ENCODE measurements at regions of chr2 and their contacts with region 1.

Region 1: DNA sequence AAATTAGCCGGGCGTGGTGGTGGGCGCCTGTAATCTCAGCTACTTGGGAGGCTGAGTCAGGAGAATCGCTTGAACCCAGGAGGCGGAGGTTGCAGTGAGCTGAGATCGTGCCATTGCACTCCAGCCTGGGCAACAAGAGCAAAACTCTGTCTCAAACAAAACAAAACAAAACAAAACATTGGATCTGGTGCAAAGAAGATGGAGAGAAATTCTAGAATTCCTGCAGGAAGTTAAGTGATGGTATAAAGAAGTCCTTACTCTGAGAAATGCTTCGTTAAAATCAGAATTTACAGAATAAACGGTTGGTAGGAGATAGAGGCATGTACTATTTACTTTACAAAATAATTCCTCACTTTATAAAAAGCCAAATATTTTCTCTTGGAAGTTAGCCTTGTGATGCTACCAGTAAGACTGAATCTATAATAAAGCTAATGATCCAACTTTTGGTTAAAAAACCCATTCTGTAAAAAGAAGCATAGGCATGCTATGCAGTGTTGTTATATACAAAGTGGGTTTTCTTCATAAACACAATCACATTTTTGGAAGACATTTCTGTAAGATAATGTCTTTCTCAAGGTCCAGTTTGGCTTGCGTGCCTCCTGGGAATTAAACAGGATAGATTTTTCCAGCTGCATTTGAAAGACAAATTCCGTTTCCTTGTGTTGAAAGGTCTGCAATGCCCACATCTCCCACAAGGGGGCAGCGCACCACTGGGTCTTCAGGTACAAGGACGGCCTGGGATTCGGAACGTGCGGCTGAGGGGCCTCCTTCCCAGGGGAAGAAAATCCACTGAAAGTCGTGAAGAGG is 35.6 kb upstream of the PNO1 start:
- DNase-seq: peak; percentile 93
- ATAC-seq: peak; percentile 64

Region 2: DNA sequence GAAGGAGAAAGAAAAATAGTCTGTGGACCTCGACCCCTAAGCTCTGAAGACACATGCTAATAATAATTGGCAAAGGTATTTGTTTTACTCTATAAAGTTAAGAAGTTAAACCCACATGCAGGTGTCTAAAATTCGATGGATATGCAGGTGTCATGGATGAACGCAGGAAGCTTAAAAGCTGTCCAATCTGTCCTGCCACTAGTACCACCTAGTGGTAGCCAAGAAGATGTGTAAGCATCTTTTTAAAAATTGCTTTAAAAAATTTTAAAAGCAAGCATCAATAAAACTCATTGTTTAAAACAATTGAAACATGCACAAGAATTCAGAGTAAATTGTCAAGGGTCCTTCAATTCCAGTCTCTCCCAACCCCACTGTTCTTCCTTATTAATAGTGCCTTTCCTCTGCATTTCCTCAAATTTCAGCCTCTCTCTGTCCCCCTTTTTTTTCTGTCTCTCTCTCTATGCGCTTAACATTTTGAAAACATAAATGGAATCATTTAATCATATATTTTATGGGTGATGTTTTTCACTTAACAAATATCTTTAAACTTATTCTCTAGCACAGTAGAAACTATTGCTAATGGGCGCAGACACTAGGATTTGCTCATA is 160.8 kb after region 1 on chr2:
- intact Hi-C with region 1: loop called (anchors 2 kb)
- DNase-seq: no peak
- ATAC-seq: no peak

Region 3: GRCh38 chr2:68309426-68309825 is 187.3 kb after region 1 on chr2:
- intact Hi-C with region 1: no loop called
- DNase-seq: no peak
- ATAC-seq: no peak

Region 4: DNA sequence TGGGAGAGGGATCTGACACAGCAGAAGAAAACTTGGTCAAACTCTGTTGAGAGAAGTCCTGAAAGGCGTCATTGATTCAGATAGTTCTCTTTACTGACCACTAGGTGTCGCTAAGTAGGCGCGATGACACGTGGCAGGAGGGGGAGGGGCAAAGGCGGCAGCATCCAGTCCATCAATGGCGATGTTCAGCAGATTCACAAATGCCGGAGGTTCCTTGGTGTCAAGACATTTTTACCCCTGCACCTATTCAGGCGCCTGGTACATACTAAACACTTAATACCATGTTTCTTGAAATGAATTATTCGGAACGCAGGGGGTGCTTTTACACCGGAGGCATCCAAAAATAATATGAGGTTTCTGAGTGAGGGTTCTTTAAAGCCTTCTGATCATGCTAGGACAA is 240.0 kb after region 1 on chr2:
- intact Hi-C with region 1: loop called (anchors 5 kb)
- DNase-seq: peak; percentile 92
- ATAC-seq: peak; percentile 71

Region 5: GRCh38 chr2:68441179-68441993 is 319.3 kb after region 1 on chr2:
- intact Hi-C with region 1: loop called (anchors 2 kb)
- DNase-seq: peak; percentile 83
- ATAC-seq: peak; percentile 93

Measured in Right ventricle myocardium inferior (tissue), 1 donor.